ENCODE measurements at regions of chr14 and their contacts with region 1.

Region 1: DNA sequence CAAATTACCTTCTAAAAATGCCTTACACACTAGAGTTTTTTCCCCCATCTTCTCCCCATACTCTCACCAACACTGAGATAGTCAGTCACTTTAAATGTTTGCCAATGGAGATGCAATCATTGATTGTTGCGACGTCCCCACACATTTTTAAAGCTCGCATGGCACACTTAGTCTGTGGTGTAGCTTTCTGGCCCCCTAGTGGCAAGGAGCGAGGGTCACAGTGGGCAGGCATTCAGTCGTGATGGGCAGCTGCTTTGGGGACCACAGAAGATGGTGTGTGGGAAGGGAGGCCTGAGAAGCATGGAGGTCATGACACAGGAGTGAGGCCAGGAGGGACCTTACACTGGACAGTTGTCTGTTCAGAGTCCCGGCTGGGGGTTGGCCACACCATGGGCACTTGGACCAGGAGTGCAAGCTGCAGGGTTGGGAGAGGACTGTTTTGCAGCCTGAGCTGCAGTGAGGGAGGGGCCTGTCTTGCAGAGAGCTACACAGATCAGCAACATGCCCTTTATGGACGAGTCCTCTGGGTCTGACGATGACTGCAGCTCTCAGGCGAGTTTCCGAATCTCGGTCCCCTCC is 28.7 kb downstream of the PIGH start:
- DNase-seq: peak; percentile 64 to 77 (median 70)
- ATAC-seq: peak; percentile 62
- H3K4me3 ChIP-seq: no peak overlapping the region
- H3K27ac ChIP-seq: no peak overlapping the region
- H3K4me1 ChIP-seq: peaks cover 18% of the 10 kb centered on the region
- H3K27me3 ChIP-seq: no peaks in the 10 kb centered on the region
- CTCF ChIP-seq: peak; percentile 51 to 88 (median 75)
- POLR2A ChIP-seq: no peak

Region 2: GRCh38 chr14:66568220-66568619 is 1003.1 kb before region 1 on chr14:
- intact Hi-C with region 1: no loop called
- DNase-seq: no peak
- ATAC-seq: no peak
- H3K4me3 ChIP-seq: no peak overlapping the region
- H3K27ac ChIP-seq: no peak overlapping the region
- H3K4me1 ChIP-seq: no peaks in the 10 kb centered on the region
- H3K27me3 ChIP-seq: no peaks in the 10 kb centered on the region
- CTCF ChIP-seq: no peak
- POLR2A ChIP-seq: no peak

Region 3: GRCh38 chr14:67396501-67396900 is 174.9 kb before region 1 on chr14:
- intact Hi-C with region 1: no loop called
- DNase-seq: no peak
- ATAC-seq: no peak
- H3K4me3 ChIP-seq: no peak overlapping the region
- H3K27ac ChIP-seq: no peak overlapping the region
- H3K4me1 ChIP-seq: no peaks in the 10 kb centered on the region
- H3K27me3 ChIP-seq: no peaks in the 10 kb centered on the region
- CTCF ChIP-seq: no peak
- POLR2A ChIP-seq: no peak

Region 4: GRCh38 chr14:67426983-67427606 is 144.3 kb before region 1 on chr14:
- intact Hi-C with region 1: loop called (anchors 10 kb)
- DNase-seq: peak; percentile 83 to 88 (median 85)
- ATAC-seq: peak; percentile 90
- H3K4me3 ChIP-seq: no peak overlapping the region
- H3K27ac ChIP-seq: peak overlapping the region in 1 of 4 donors; percentile 63
- H3K4me1 ChIP-seq: peaks cover 21% of the 10 kb centered on the region
- H3K27me3 ChIP-seq: no peaks in the 10 kb centered on the region
- CTCF ChIP-seq: peak; percentile 68 to 93 (median 87)
- POLR2A ChIP-seq: no peak

Region 5: GRCh38 chr14:67532998-67533753 is 38.2 kb before region 1 on chr14 and contains the start of gene PLEKHH1:
- intact Hi-C with region 1: loop called (anchors 5 kb)
- DNase-seq: peak; percentile 88 to 92 (median 92)
- ATAC-seq: peak; percentile 97
- H3K4me3 ChIP-seq: peak within 1 kb of the TSS; percentile 26 to 42
- H3K27ac ChIP-seq: peak within 1 kb of the TSS; percentile 91 to 98 (median 94)
- H3K4me1 ChIP-seq: peaks cover 28% of the 10 kb centered on the region
- H3K27me3 ChIP-seq: no peaks in the 10 kb centered on the region
- CTCF ChIP-seq: peak in 1 of 7 experiments; percentile 20
- POLR2A ChIP-seq: peak; percentile 63 to 91 (median 90)
- total RNA-seq, gene PLEKHH1: 32.7 to 54.7 TPM

Measured in body of pancreas (tissue), 4 donors.